Activated CD8-positive, alpha-beta memory T cell treated with anti-CD3 and anti-CD28 coated beads, Interleukin-2, amount 10 ng/mL, durations not matched to agents 7 days and 5 days (primary cell): ENCODE measurements at regions of chr17 and their contacts with region 1.

Region 1: GRCh38 chr17:28540231-28540630 is 12.2 kb downstream of the UNC119 start:
- DNase-seq: no peak
- ATAC-seq: no peak
- H3K4me3 Mint-ChIP-seq: no peak overlapping the region
- H3K27ac Mint-ChIP-seq: no peak overlapping the region
- H3K4me1 Mint-ChIP-seq: no peaks in the 10 kb centered on the region
- H3K27me3 Mint-ChIP-seq: no peaks in the 10 kb centered on the region

Region 2: DNA sequence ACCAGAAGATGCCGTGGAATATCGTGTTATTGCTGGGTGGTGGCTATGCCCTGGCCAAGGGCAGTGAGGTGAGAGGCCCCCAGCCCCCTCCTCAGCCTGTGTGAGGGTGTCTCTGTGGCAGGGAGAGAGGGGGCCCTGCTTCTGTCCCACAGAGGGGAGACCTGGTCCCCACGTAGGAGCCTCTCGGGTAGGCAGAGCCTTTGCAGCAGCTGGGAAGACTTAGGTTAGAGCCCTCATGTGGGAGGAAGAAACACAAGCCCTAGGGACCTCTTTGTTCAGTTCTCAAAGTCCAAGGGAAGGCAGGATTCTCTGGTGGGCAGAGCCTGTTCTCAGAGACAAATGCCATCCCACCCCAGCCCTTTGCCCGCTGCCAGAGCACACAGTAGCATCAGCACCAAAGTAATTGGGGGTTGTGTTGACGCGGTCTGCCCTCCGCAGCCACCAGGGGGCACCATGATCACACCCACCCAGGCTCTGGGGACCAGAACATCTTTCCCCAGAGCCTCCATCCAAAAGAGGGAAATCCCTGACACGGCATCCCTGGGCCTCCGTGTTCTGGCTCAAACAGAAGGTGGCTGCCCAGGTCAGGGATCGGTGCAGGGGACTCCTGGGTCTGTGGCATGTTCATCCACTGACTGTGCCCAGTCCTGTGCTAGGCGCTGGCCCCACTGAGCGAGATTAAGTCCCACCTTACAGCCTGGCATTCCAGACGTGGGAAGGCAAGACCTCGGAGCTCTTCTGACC is 45.6 kb before region 1 on chr17:
- CTCF ChIA-PET with region 1: interaction called, 24 read pairs
- DNase-seq: peak; percentile 79
- ATAC-seq: peak; percentile 93
- H3K4me3 Mint-ChIP-seq: no peak overlapping the region
- H3K27ac Mint-ChIP-seq: no peak overlapping the region
- H3K4me1 Mint-ChIP-seq: no peaks in the 10 kb centered on the region
- H3K27me3 Mint-ChIP-seq: peaks cover 7% of the 10 kb centered on the region

Region 3: DNA sequence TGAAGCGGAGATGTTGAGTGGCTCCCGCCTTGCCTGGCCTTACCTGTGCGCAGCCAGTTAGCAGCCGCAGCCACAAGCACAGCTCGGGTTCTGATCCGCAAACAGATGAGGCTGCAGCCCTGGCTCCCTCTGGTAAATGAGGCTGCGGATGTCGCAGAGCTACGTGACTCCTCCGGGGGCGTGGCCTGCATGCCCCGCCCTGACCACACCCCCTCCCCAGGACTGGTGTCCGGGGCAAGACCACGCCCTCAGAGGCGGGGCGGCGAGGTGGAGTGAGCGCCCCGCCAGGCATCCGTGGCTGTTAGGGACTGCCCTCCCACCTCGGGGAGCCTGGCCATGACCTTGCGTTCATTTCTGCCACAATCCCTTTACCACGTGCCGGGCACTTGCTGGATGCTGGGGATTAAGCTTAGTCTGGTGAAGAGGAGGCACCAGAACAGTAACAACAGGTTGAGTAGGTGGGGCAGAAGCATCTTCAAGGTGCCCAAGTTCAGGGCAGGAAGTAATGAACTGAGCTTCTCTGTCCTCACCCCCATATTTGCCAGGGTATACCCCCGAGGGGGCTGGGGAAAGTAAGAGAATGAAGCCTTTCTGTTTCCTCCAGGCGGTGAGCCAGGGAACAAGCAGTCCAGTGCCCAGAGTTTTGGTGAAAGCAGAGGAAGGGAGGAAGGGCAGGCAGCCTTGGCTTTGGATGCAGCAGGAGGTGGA is 36.7 kb after region 1 on chr17 and contains the start of gene ALDOC:
- CTCF ChIA-PET with region 1: interaction called, 10 read pairs
- DNase-seq: peak; percentile 98
- ATAC-seq: peak; percentile 92
- H3K4me3 Mint-ChIP-seq: peak within 1 kb of the TSS; percentile 81
- H3K27ac Mint-ChIP-seq: peak within 1 kb of the TSS; percentile 83
- H3K4me1 Mint-ChIP-seq: peaks cover 59% of the 10 kb centered on the region
- H3K27me3 Mint-ChIP-seq: no peaks in the 10 kb centered on the region
- total RNA-seq, gene ALDOC: 36.9 to 52.0 TPM